Naive thymus-derived CD4-positive, alpha-beta T cell (primary cell): ENCODE measurements at regions of chr17 and their contacts with region 1.

Region 1: DNA sequence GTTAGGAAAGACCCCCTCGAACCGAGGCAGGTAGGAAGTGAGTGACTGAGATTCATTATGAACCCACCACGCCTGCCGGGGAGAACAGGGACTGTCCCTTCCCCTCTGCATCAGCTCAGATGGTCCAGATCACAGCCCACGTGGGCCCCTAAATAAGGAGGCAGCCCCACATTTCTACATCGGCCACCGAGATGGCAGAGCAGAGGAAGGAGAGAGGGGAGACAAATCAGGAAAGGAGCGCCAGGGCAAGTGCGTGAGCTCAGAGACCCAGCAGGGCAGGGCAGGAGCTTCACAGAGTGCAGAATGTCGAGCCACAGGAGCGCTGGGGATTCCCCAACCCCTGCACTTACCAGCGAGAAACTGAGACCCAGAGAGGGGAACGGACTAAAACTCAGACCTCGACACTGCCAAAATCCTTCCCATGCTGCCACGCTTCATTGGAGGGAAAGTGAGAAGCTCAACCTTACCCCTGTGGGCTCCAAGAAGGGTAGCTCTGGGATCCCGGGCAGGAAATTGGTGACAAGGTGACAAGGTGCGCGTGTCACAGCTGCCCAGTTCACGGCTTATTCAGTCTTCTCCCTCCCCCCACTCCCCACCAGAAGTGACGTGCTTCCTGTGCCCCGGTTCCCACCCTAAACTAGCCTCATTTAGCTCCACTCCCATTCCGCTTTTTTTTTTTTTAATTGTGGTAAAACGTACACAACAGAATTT is at the start of gene ICAM2:
- DNase-seq: peak; percentile 73 to 97 (median 96)
- ATAC-seq: peak; percentile 90
- H3K4me3 ChIP-seq: peak within 1 kb of the TSS; percentile 94
- H3K4me3 Mint-ChIP-seq: peak within 1 kb of the TSS; percentile 91 to 100 (median 98)
- H3K27ac ChIP-seq: peak within 1 kb of the TSS; percentile 96
- H3K27ac Mint-ChIP-seq: peak within 1 kb of the TSS; percentile 91 to 100 (median 100)
- H3K4me1 ChIP-seq: peaks cover 57 to 68% of the 10 kb centered on the region in 2 donors
- H3K4me1 Mint-ChIP-seq: peaks cover 45 to 79% (median 71%) of the 10 kb centered on the region in 7 donors
- H3K27me3 ChIP-seq: no peaks in the 10 kb centered on the region
- H3K27me3 Mint-ChIP-seq: peaks cover 0 to 2% (median 0%) of the 10 kb centered on the region in 5 donors
- total RNA-seq, gene ICAM2: 60.9 to 132 (median 92.3) TPM

Region 2: GRCh38 chr17:62933501-62934385 is 1086.5 kb before region 1 on chr17:
- CTCF ChIA-PET with region 1: no interaction called
- POLR2A ChIA-PET with region 1: no interaction called
- intact Hi-C with region 1: no loop called
- DNase-seq: no peak
- ATAC-seq: no peak
- H3K4me3 ChIP-seq: no peak overlapping the region
- H3K4me3 Mint-ChIP-seq: no peak overlapping the region
- H3K27ac ChIP-seq: no peak overlapping the region
- H3K27ac Mint-ChIP-seq: no peak overlapping the region
- H3K4me1 ChIP-seq: no peaks in the 10 kb centered on the region
- H3K4me1 Mint-ChIP-seq: no peaks in the 10 kb centered on the region
- H3K27me3 ChIP-seq: no peaks in the 10 kb centered on the region
- H3K27me3 Mint-ChIP-seq: peaks cover 23 to 55% (median 45%) of the 10 kb centered on the region in 5 donors

Region 3: DNA sequence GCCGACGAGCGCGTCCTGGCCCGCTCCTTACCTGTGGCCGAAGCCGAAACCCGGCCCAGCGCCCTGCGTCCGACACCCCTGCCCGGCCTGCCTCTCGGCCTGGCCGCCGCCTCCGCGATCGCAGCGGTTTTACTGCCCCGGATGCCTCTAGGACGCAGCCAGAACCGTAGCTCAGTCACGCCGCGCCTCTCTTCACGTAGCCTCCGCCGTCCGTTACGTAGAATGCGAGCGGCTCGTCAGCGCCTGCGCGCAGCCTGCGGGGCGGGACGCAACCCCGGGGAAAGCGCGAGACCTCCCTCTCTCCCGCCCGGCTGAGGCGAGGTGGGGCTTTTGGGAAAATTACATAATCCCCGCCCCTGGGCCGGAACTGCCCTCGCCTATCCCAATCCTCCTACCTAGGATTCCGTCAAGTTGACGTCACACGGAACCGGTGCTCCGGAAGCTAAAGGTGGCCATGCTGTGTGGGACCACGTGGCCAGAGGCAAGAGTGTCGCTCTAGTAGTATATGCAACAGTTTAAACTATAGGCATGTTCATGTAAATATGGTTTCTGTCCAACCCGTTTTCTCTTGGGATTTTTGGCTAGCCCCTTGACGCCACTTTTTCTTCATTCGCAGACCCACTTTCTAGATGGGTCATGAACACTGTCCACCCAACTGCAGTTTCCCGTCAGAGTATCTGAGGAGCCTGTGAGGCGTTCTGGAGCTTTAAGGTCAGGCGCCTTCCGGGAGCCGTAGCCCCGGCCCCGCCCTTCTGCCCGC is 246.7 kb before region 1 on chr17 and contains the start of gene CCDC47:
- CTCF ChIA-PET with region 1: interaction called, 6 read pairs
- POLR2A ChIA-PET with region 1: no interaction called
- intact Hi-C with region 1: loop called (anchors 5 to 10 kb)
- DNase-seq: peak; percentile 92 to 99 (median 99)
- ATAC-seq: peak; percentile 88
- H3K4me3 ChIP-seq: peak within 1 kb of the TSS; percentile 85
- H3K4me3 Mint-ChIP-seq: peak within 1 kb of the TSS; percentile 91 to 99 (median 98)
- H3K27ac ChIP-seq: peak within 1 kb of the TSS; percentile 100
- H3K27ac Mint-ChIP-seq: peak within 1 kb of the TSS; percentile 97 to 100 (median 99)
- H3K4me1 ChIP-seq: peaks cover 21 to 46% of the 10 kb centered on the region in 2 donors
- H3K4me1 Mint-ChIP-seq: peaks cover 31 to 84% (median 62%) of the 10 kb centered on the region in 7 donors
- H3K27me3 ChIP-seq: no peaks in the 10 kb centered on the region
- H3K27me3 Mint-ChIP-seq: peaks cover 0 to 7% (median 0%) of the 10 kb centered on the region in 5 donors
- total RNA-seq, gene CCDC47: 31.8 to 62.9 (median 34.7) TPM

Region 4: GRCh38 chr17:63911657-63912426 is 108.4 kb before region 1 on chr17:
- CTCF ChIA-PET with region 1: interaction called, 10 read pairs
- POLR2A ChIA-PET with region 1: interaction called, 5 read pairs
- intact Hi-C with region 1: no loop called
- DNase-seq: peak; percentile 30 to 64 (median 49)
- ATAC-seq: peak; percentile 88
- H3K4me3 ChIP-seq: no peak overlapping the region
- H3K4me3 Mint-ChIP-seq: peak overlapping the region in 1 of 10 donors; percentile 25
- H3K27ac ChIP-seq: no peak overlapping the region
- H3K27ac Mint-ChIP-seq: peak overlapping the region in 1 of 9 donors; percentile 78
- H3K4me1 ChIP-seq: no peaks in the 10 kb centered on the region
- H3K4me1 Mint-ChIP-seq: peaks cover 0 to 10% (median 0%) of the 10 kb centered on the region in 7 donors
- H3K27me3 ChIP-seq: no peaks in the 10 kb centered on the region
- H3K27me3 Mint-ChIP-seq: peaks cover 0 to 28% (median 0%) of the 10 kb centered on the region in 5 donors

Region 5: GRCh38 chr17:63931099-63931561 is 89.1 kb before region 1 on chr17:
- CTCF ChIA-PET with region 1: interaction called, 8 read pairs
- POLR2A ChIA-PET with region 1: interaction called, 18 read pairs
- intact Hi-C with region 1: loop called in 1 of 2 experiments (anchors 5 kb)
- DNase-seq: peak; percentile 29 to 56 (median 48)
- ATAC-seq: peak; percentile 82
- H3K4me3 ChIP-seq: peak overlapping the region; percentile 85
- H3K4me3 Mint-ChIP-seq: peak overlapping the region; percentile 88 to 99 (median 96)
- H3K27ac ChIP-seq: peak overlapping the region; percentile 84
- H3K27ac Mint-ChIP-seq: peak overlapping the region; percentile 87 to 96 (median 93)
- H3K4me1 ChIP-seq: peaks cover 13 to 21% of the 10 kb centered on the region in 2 donors
- H3K4me1 Mint-ChIP-seq: peaks cover 11 to 28% (median 24%) of the 10 kb centered on the region in 7 donors
- H3K27me3 ChIP-seq: no peaks in the 10 kb centered on the region
- H3K27me3 Mint-ChIP-seq: peaks cover 0 to 5% (median 0%) of the 10 kb centered on the region in 5 donors

Region 6: DNA sequence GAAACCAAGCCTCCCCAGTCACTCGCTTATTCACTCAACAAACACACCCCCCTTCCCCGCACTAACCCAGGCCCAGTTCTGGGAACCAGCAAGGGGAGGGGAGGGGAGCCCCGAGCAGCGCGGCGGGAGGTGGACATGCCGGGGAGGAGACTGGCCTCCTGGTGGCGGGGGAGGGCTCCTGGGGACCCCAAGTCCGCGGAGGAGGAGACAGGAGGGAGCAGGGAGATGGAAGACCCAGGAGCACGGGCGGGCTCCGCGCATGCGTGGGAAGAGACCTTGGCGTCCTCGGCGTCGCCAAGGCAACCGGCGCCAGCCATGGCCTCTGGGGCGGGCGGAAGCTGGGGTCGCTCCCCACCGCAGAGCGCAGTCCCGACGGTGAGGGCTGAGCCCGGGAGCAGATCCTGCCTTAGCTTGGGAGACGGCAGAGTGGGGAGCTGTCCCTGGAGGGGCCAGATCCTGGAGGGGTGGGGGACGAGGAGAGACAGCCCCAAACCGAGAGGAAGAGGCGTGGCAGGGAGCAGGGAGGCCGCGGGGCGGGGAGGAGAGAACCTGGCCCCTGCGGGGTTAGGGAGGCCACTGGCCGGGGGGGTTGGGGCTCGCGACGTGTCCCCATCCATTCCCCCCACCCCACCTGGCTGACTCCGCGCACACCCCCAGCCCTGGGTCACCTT is 22.0 kb before region 1 on chr17 and contains the start of gene PRR29:
- CTCF ChIA-PET with region 1: interaction called, 20 read pairs
- POLR2A ChIA-PET with region 1: interaction called, 58 read pairs
- intact Hi-C with region 1: loop called (anchors 1 kb)
- DNase-seq: peak; percentile 65 to 76 (median 71)
- ATAC-seq: peak; percentile 78
- H3K4me3 ChIP-seq: peak within 1 kb of the TSS; percentile 81
- H3K4me3 Mint-ChIP-seq: peak within 1 kb of the TSS; percentile 79 to 96 (median 90)
- H3K27ac ChIP-seq: peak within 1 kb of the TSS; percentile 53
- H3K27ac Mint-ChIP-seq: peak within 1 kb of the TSS; percentile 64 to 86 (median 82)
- H3K4me1 ChIP-seq: peaks cover 20 to 32% of the 10 kb centered on the region in 2 donors
- H3K4me1 Mint-ChIP-seq: peaks cover 30 to 51% (median 44%) of the 10 kb centered on the region in 7 donors
- H3K27me3 ChIP-seq: no peaks in the 10 kb centered on the region
- H3K27me3 Mint-ChIP-seq: peaks cover 0 to 17% (median 0%) of the 10 kb centered on the region in 5 donors
- total RNA-seq, gene PRR29: 0.29 to 2.8 (median 0.40) TPM in 3 of 5 experiments, not detected in the others

Region 7: DNA sequence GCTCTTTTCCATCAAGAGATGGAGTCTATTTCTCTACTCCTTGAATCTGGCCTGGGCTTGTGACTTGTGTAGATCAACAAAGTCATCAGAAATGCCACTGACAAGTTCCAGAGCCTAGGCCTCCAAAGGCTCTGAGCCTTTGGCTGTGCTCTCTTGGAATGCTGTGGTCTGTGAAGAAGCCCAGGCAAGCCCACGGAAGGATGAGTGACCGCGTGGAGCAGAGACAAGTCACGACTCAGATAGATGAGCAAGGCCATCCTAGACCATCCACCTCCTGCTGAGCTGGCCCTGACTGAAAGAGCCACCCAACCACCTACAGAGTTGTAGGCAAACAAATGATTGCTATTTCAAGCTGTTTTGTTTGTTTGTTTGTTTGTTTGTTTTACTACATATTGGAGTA is 11.9 kb after region 1 on chr17:
- CTCF ChIA-PET with region 1: interaction called, 24 read pairs
- POLR2A ChIA-PET with region 1: interaction called, 23 read pairs
- intact Hi-C with region 1: no loop called
- DNase-seq: no peak
- ATAC-seq: no peak
- H3K4me3 ChIP-seq: no peak overlapping the region
- H3K4me3 Mint-ChIP-seq: no peak overlapping the region
- H3K27ac ChIP-seq: no peak overlapping the region
- H3K27ac Mint-ChIP-seq: no peak overlapping the region
- H3K4me1 ChIP-seq: peaks cover 3 to 8% of the 10 kb centered on the region in 2 donors
- H3K4me1 Mint-ChIP-seq: peaks cover 9 to 26% (median 13%) of the 10 kb centered on the region in 7 donors
- H3K27me3 ChIP-seq: no peaks in the 10 kb centered on the region
- H3K27me3 Mint-ChIP-seq: no peaks in the 10 kb centered on the region

Region 8: DNA sequence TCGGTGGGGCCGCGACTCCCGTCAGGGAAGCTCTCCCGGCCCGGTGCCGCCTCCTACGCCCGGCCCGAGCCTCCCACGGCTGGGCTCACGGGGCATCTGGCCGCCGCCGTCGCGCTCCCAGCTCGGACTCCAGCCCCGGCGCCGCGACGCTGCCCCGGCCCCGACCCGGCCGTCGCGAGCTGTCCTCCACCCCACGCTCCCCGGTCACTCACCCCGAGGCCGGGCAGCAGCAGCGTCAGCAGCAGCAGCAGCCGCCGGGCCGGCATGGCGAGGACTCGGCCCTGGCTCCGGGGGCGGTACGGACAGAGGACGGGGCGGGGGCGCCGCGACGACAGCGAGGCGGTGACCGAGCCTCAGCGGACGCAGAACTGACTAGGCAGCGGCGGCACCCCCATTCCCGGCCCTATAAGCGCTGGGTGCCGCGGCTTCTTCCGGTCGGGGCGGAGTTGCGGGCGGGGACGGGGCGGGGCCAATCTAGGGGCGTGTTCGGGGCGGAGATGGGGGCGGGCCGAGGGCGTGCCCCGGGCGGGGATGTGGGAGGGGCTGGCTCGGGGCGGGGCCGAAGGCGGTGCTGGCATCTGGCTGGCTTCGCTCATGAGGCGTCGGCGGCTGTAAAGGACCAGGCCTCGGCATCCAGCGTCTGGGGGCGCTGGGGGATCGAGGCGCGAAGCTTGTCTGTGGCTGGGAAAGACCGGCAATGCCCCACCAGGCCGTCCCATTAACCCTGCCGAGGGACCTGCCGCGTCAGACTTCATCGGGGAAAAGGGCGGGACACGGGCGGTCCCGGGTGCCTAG is 109.8 kb after region 1 on chr17 and contains the start of gene ERN1:
- CTCF ChIA-PET with region 1: interaction called, 289 read pairs
- POLR2A ChIA-PET with region 1: interaction called, 132 read pairs
- intact Hi-C with region 1: loop called (anchors 1 kb)
- DNase-seq: peak; percentile 84 to 93 (median 91)
- ATAC-seq: peak; percentile 96
- H3K4me3 ChIP-seq: peak within 1 kb of the TSS; percentile 69
- H3K4me3 Mint-ChIP-seq: peak within 1 kb of the TSS; percentile 85 to 97 (median 94)
- H3K27ac ChIP-seq: peak within 1 kb of the TSS; percentile 77
- H3K27ac Mint-ChIP-seq: peak within 1 kb of the TSS; percentile 83 to 98 (median 93)
- H3K4me1 ChIP-seq: peaks cover 12 to 32% of the 10 kb centered on the region in 2 donors
- H3K4me1 Mint-ChIP-seq: peaks cover 28 to 57% (median 53%) of the 10 kb centered on the region in 7 donors
- H3K27me3 ChIP-seq: no peaks in the 10 kb centered on the region
- H3K27me3 Mint-ChIP-seq: no peaks in the 10 kb centered on the region
- total RNA-seq, gene ERN1: 52.6 to 110 (median 62.9) TPM

Region 9: GRCh38 chr17:64270885-64271284 is 250.7 kb after region 1 on chr17:
- CTCF ChIA-PET with region 1: no interaction called
- POLR2A ChIA-PET with region 1: no interaction called
- intact Hi-C with region 1: no loop called
- DNase-seq: peak in 3 of 9 donors; percentile 5 to 11 (median 9)
- ATAC-seq: peak; percentile 49
- H3K4me3 ChIP-seq: no peak overlapping the region
- H3K4me3 Mint-ChIP-seq: peak overlapping the region; percentile 33 to 68 (median 52)
- H3K27ac ChIP-seq: no peak overlapping the region
- H3K27ac Mint-ChIP-seq: peak overlapping the region; percentile 47 to 88 (median 83)
- H3K4me1 ChIP-seq: peaks cover 0 to 16% of the 10 kb centered on the region in 2 donors
- H3K4me1 Mint-ChIP-seq: peaks cover 6 to 43% (median 35%) of the 10 kb centered on the region in 7 donors
- H3K27me3 ChIP-seq: no peaks in the 10 kb centered on the region
- H3K27me3 Mint-ChIP-seq: peaks cover 0 to 19% (median 5%) of the 10 kb centered on the region in 5 donors